ENCODE measurements at regions of chr9 and their contacts with region 1.

Region 1: GRCh38 chr9:74379718-74380117 is 117.4 kb upstream of the RORB start:
- DNase-seq: peak; percentile 5
- ATAC-seq: no peak
- H3K4me3 ChIP-seq: no peak overlapping the region
- H3K27ac ChIP-seq: no peak overlapping the region
- H3K4me1 ChIP-seq: no peaks in the 10 kb centered on the region
- H3K27me3 ChIP-seq: no peaks in the 10 kb centered on the region
- CTCF ChIP-seq: peak; percentile 27

Region 2: GRCh38 chr9:74361508-74361907 is 18.2 kb before region 1 on chr9:
- CTCF ChIA-PET with region 1: no interaction called
- POLR2A ChIA-PET with region 1: no interaction called
- in situ Hi-C with region 1: no loop called
- intact Hi-C with region 1: no loop called
- DNase-seq: no peak
- ATAC-seq: no peak
- H3K4me3 ChIP-seq: no peak overlapping the region
- H3K27ac ChIP-seq: no peak overlapping the region
- H3K4me1 ChIP-seq: no peaks in the 10 kb centered on the region
- H3K27me3 ChIP-seq: no peaks in the 10 kb centered on the region
- CTCF ChIP-seq: no peak

Region 3: GRCh38 chr9:74391816-74392215 is 12.1 kb after region 1 on chr9:
- CTCF ChIA-PET with region 1: no interaction called
- POLR2A ChIA-PET with region 1: no interaction called
- in situ Hi-C with region 1: no loop called
- intact Hi-C with region 1: no loop called
- DNase-seq: no peak
- ATAC-seq: no peak
- H3K4me3 ChIP-seq: no peak overlapping the region
- H3K27ac ChIP-seq: no peak overlapping the region
- H3K4me1 ChIP-seq: no peaks in the 10 kb centered on the region
- H3K27me3 ChIP-seq: no peaks in the 10 kb centered on the region
- CTCF ChIP-seq: no peak

Region 4: GRCh38 chr9:74431467-74431866 is 51.7 kb after region 1 on chr9:
- CTCF ChIA-PET with region 1: no interaction called
- POLR2A ChIA-PET with region 1: no interaction called
- in situ Hi-C with region 1: no loop called
- intact Hi-C with region 1: loop called (anchors 10 kb)
- DNase-seq: no peak
- ATAC-seq: no peak
- H3K4me3 ChIP-seq: no peak overlapping the region
- H3K27ac ChIP-seq: no peak overlapping the region
- H3K4me1 ChIP-seq: no peaks in the 10 kb centered on the region
- H3K27me3 ChIP-seq: no peaks in the 10 kb centered on the region
- CTCF ChIP-seq: no peak